CD4-positive, alpha-beta memory T cell (primary cell): ENCODE measurements at regions of chr7 and their contacts with region 1.

Region 1: DNA sequence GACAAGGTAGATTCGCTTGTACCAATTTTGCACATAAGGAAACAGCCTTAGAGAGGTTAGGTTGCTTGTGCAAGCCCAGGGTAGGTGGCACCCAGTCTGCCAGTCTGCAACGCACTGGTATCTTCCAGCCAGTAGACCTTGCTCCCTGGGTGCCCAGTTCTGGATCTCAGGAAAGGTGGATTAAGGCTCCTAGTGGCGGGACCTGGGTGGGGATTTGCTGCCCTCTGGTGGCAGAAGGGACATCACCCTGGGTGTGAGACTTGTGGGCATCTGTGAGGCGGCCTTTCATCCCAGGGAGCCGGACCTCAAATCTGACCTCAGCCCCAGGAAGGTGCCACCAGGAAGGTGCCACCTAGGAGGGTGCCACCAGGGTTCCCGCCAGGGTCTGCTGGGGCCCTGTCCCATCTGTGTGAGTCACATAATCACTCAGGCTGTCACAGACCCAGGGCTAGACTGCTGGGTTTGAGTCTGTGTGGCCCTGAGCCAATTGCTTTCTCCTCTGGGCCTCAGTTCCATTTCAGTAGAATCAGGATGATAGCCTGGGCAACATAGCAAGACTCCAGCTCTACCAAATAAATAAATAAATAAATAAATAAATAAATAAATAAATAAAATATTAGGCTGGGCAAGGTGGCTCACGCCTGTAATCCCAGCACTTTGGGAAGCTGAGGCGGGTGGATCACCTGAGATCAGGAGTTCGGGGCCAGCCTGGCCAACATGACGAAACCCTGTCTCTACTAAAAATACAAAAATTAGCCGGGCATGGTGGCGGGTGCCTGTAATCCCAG is 5.3 kb upstream of the PRKRIP1 start:
- DNase-seq: peak; percentile 57 to 63 (median 60)
- H3K4me3 ChIP-seq: no peak overlapping the region
- H3K4me3 Mint-ChIP-seq: no peak overlapping the region
- H3K27ac ChIP-seq: no peak overlapping the region
- H3K27ac Mint-ChIP-seq: peak overlapping the region in 1 of 7 donors; percentile 37
- H3K4me1 ChIP-seq: peaks cover 6% of the 10 kb centered on the region
- H3K4me1 Mint-ChIP-seq: peaks cover 5 to 8% (median 6%) of the 10 kb centered on the region in 4 donors
- H3K27me3 ChIP-seq: no peaks in the 10 kb centered on the region
- H3K27me3 Mint-ChIP-seq: no peaks in the 10 kb centered on the region

Region 2: GRCh38 chr7:102279537-102280400 is 111.1 kb before region 1 on chr7:
- CTCF ChIA-PET with region 1: interaction called, 59 read pairs
- POLR2A ChIA-PET with region 1: interaction called, 8 read pairs
- intact Hi-C with region 1: no loop called
- DNase-seq: peak; percentile 46 to 57 (median 54)
- H3K4me3 ChIP-seq: no peak overlapping the region
- H3K4me3 Mint-ChIP-seq: no peak overlapping the region
- H3K27ac ChIP-seq: no peak overlapping the region
- H3K27ac Mint-ChIP-seq: peak overlapping the region in 2 of 7 donors; percentile 60 to 67
- H3K4me1 ChIP-seq: peaks cover 4% of the 10 kb centered on the region
- H3K4me1 Mint-ChIP-seq: peaks cover 4 to 17% (median 10%) of the 10 kb centered on the region in 4 donors
- H3K27me3 ChIP-seq: no peaks in the 10 kb centered on the region
- H3K27me3 Mint-ChIP-seq: no peaks in the 10 kb centered on the region